Mammary epithelial cell (primary cell): ENCODE measurements at regions of chr4 and their contacts with region 1.

Region 1: GRCh38 chr4:145732895-145733880 is 53.2 kb downstream of the C4orf51 start:
- DNase-seq: peak; percentile 95
- H3K4me3 ChIP-seq: peak overlapping the region; percentile 36 to 61 (median 50)
- H3K27ac ChIP-seq: peak overlapping the region; percentile 99
- H3K4me1 ChIP-seq: peaks cover 35% of the 10 kb centered on the region
- H3K27me3 ChIP-seq: no peaks in the 10 kb centered on the region
- CTCF ChIP-seq: no peak

Region 2: DNA sequence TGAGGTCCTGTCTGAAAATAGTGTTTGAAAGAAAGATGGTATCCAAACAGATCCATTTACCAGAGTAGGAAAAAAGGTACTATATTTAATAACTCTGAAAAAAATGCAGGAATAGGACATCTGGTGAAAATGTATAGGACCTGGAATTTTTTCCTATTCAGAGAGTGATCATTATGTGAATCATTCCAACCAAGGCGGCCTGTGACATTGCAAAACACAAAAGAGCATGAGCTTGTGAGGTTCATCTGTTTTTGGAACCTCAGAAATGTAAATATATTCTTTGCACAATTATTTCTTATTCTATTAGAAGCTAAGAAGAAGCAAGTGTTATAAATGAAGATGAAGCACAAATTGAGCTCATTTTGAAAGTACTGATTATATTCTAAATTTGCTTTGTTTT is 51.2 kb before region 1 on chr4:
- CTCF ChIA-PET with region 1: no interaction called
- dilution Hi-C with region 1: no loop called
- in situ Hi-C with region 1: no loop called
- intact Hi-C with region 1: no loop called
- DNase-seq: no peak
- H3K4me3 ChIP-seq: no peak overlapping the region
- H3K27ac ChIP-seq: no peak overlapping the region
- H3K4me1 ChIP-seq: peaks cover 11% of the 10 kb centered on the region
- H3K27me3 ChIP-seq: no peaks in the 10 kb centered on the region
- CTCF ChIP-seq: no peak

Region 3: GRCh38 chr4:145709843-145710242 is 23.3 kb before region 1 on chr4:
- CTCF ChIA-PET with region 1: no interaction called
- dilution Hi-C with region 1: no loop called
- in situ Hi-C with region 1: no loop called
- intact Hi-C with region 1: loop called (anchors 2 kb)
- DNase-seq: peak; percentile 90
- H3K4me3 ChIP-seq: no peak overlapping the region
- H3K27ac ChIP-seq: no peak overlapping the region
- H3K4me1 ChIP-seq: peaks cover 18% of the 10 kb centered on the region
- H3K27me3 ChIP-seq: no peaks in the 10 kb centered on the region
- CTCF ChIP-seq: no peak

Region 4: DNA sequence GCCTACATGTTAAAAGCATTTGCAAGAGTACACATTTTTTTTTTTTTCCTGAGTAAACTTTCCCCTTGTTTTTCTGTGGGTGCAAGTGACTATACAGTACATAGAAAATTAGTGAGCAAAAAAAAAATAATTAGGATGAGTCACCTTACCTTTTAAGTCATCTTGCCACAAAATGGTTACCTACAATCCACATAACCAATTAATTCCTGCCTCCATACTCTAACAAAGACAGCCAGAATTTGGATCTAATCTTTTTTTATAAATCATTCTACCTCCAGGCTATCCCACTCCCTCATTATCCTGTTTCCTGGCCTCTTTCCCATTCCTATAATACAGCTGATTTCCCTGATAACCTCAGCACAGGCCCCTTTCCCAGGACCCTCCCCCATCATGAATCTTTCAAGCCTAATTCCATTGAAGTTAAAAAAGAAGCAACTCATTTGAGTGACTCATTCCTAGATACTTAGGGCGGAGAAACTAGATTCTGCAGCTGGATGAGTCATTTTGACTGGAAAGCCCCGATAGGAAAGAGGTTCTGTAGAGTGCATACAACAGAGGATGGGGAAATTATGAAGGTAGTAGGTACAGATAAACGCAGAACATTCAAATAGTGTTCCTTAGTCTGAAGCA is 74.9 kb after region 1 on chr4:
- CTCF ChIA-PET with region 1: no interaction called
- dilution Hi-C with region 1: no loop called
- in situ Hi-C with region 1: no loop called
- intact Hi-C with region 1: loop called (anchors 1 kb)
- DNase-seq: peak; percentile 99
- H3K4me3 ChIP-seq: peak overlapping the region in 1 of 3 experiments; percentile 21
- H3K27ac ChIP-seq: peak overlapping the region; percentile 98
- H3K4me1 ChIP-seq: peaks cover 48% of the 10 kb centered on the region
- H3K27me3 ChIP-seq: no peaks in the 10 kb centered on the region
- CTCF ChIP-seq: no peak

Region 5: DNA sequence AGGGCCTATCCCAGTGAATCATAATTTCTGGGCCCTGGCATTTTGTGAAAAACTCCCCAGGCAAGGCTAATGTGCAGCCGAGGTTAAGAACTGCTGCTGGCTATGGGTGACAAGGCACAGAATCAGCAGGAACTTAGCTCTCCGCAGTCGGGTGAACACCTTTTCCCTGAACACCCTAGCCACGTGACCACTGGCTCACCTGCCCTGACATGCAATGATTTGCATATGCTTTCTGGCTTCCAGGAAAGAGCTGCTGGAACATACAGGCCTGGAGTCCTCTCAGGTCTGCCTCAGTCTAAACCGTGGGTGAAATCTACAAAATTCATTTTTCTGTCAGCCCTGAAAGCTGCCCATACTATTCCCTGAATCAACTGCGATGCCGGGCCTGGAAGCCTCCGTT is 148.8 kb after region 1 on chr4:
- CTCF ChIA-PET with region 1: no interaction called
- dilution Hi-C with region 1: no loop called
- in situ Hi-C with region 1: no loop called
- intact Hi-C with region 1: loop called (anchors 5 kb)
- DNase-seq: peak; percentile 94
- H3K4me3 ChIP-seq: no peak overlapping the region
- H3K27ac ChIP-seq: peak overlapping the region; percentile 50
- H3K4me1 ChIP-seq: peaks cover 41% of the 10 kb centered on the region
- H3K27me3 ChIP-seq: no peaks in the 10 kb centered on the region
- CTCF ChIP-seq: no peak

Region 6: GRCh38 chr4:145956288-145956890 is 223.2 kb after region 1 on chr4:
- CTCF ChIA-PET with region 1: no interaction called
- dilution Hi-C with region 1: no loop called
- in situ Hi-C with region 1: no loop called
- intact Hi-C with region 1: loop called (anchors 1 kb)
- DNase-seq: peak; percentile 25
- H3K4me3 ChIP-seq: no peak overlapping the region
- H3K27ac ChIP-seq: no peak overlapping the region
- H3K4me1 ChIP-seq: peaks cover 27% of the 10 kb centered on the region
- H3K27me3 ChIP-seq: no peaks in the 10 kb centered on the region
- CTCF ChIP-seq: peak; percentile 71 to 76